ENCODE measurements at regions of chr10 and their contacts with region 1.

Region 1: DNA sequence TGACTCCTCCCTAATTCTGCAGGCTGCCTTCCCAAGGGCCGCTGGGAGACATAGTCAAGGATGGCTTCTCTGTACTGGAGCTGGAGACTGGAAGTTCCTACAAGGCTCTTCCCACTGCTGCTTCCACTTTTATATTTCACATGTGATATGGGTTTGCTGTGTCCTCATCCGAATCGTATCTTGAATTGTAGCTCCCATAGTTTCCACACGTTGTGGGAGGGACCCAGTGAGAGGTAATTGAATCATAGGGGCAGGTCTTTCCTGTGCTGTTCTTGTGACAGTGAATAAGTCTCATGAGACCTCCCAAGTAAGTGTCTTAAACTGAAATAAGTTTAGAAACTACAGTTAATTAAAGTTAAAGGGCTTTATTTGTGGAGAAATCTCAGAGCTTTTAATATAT is 47.0 kb upstream of the BICC1 start:
- DNase-seq: no peak
- ATAC-seq: no peak
- H3K4me3 Mint-ChIP-seq: no peak overlapping the region
- H3K27ac Mint-ChIP-seq: no peak overlapping the region
- H3K4me1 Mint-ChIP-seq: peaks cover 6% of the 10 kb centered on the region; the same call in 1 of the 2 replicates
- H3K27me3 Mint-ChIP-seq: no peaks in the 10 kb centered on the region; the same call in 1 of the 2 replicates
- CTCF ChIP-seq: no peak

Region 2: GRCh38 chr10:58414270-58415041 is 51.2 kb before region 1 on chr10:
- CTCF ChIA-PET with region 1: interaction called, 11 read pairs
- POLR2A ChIA-PET with region 1: no interaction called
- DNase-seq: no peak
- ATAC-seq: peak; percentile 47
- H3K4me3 Mint-ChIP-seq: no peak overlapping the region
- H3K27ac Mint-ChIP-seq: no peak overlapping the region
- H3K4me1 Mint-ChIP-seq: peaks cover 21% of the 10 kb centered on the region
- H3K27me3 Mint-ChIP-seq: no peaks in the 10 kb centered on the region
- CTCF ChIP-seq: no peak

Region 3: DNA sequence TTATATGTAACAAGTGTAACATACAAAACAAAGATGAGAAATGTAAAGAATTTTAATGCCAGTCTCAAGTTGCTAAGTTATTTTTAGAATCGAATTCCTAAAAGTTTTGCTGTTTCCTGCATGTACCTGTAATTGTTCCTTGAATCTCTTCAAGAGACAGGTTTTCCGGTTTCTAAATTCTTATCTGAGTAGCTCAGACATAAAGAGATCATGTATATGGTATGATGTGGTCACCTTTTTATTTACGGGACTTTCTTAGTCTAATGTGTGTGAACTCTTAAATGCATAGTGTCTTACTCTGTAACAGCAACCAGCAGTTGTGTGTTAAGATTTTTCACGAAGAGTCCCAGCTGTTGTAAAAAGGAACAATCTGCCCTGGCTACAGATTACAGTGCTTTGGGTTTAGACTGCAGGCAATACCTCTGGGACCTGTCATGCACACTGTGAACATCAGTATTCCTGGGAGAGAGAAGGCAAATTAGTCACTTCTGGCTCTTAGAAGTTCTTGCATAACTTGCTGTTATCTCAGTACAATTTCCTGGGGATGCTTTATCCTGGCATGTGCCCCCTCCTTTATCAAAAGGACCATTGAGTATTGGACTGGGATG is 310.4 kb after region 1 on chr10:
- CTCF ChIA-PET with region 1: no interaction called
- POLR2A ChIA-PET with region 1: no interaction called
- DNase-seq: no peak
- ATAC-seq: no peak
- H3K4me3 Mint-ChIP-seq: no peak overlapping the region
- H3K27ac Mint-ChIP-seq: no peak overlapping the region
- H3K4me1 Mint-ChIP-seq: peaks cover 6% of the 10 kb centered on the region; the same call in 1 of the 2 replicates
- H3K27me3 Mint-ChIP-seq: no peaks in the 10 kb centered on the region
- CTCF ChIP-seq: no peak